ENCODE measurements at regions of chr13 and their contacts with region 1.

Region 1: DNA sequence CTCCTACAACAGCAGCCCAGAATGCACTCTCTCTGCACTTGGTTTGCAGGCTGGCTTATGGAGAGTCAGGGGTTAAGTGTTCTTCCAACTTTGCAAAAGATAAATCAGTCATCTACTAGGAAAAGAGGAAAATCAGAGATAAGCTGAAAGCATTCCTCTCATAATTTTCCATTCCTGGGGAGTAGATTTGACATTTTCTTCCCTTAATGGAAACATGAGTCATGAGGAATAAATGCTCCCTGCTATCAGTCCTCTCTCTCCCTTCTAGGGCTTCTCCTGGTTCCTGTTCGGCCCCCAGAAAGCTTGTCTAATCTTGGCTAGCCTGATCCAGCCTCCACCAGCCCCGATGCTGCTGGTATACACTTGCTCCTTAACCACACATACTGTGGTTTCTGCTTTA is 28.4 kb upstream of the ENOX1 start:
- DNase-seq: peak; percentile 68 to 89
- H3K4me3 ChIP-seq: no peak overlapping the region
- H3K4me3 Mint-ChIP-seq: peak overlapping the region; percentile 38
- H3K27ac Mint-ChIP-seq: peak overlapping the region; percentile 80
- H3K4me1 ChIP-seq: peaks cover 38% of the 10 kb centered on the region
- H3K4me1 Mint-ChIP-seq: peaks cover 34% of the 10 kb centered on the region
- H3K27me3 ChIP-seq: no peaks in the 10 kb centered on the region
- H3K27me3 Mint-ChIP-seq: no peaks in the 10 kb centered on the region
- CTCF ChIP-seq: no peak

Region 2: DNA sequence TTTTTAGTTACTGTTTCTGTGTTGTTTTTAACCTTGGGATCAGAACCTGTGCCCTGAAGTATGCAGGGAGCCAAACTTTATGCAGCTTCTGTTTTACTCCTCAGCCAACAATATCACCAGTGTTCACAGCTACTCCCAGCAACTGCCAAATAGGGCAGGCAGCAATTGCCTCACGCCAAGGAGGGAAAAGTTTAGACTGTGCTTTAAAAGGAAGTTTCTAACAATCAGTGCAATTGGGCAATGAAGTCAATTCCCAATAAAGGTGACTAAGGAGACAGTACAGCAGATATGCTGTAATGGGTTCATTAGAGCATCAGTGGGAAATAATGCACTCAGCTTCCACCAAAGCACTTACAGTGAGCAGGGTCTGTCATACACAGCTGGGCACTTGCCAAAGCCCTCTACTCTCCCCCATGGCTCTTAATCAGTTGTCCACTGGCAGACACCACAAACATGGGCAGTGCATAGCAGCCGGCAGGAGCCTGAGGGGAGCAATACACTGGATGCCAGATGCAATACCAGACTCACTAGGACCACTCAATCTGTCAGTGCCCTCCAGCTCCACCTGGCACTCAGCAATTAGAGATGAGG is 47.8 kb before region 1 on chr13:
- CTCF ChIA-PET with region 1: no interaction called
- POLR2A ChIA-PET with region 1: no interaction called
- intact Hi-C with region 1: no loop called
- DNase-seq: no peak
- H3K4me3 ChIP-seq: no peak overlapping the region
- H3K4me3 Mint-ChIP-seq: no peak overlapping the region
- H3K27ac Mint-ChIP-seq: no peak overlapping the region
- H3K4me1 ChIP-seq: peaks cover 37% of the 10 kb centered on the region
- H3K4me1 Mint-ChIP-seq: peaks cover 22% of the 10 kb centered on the region
- H3K27me3 ChIP-seq: no peaks in the 10 kb centered on the region
- H3K27me3 Mint-ChIP-seq: no peaks in the 10 kb centered on the region
- CTCF ChIP-seq: no peak

Region 3: GRCh38 chr13:43878892-43879754 is 63.9 kb after region 1 on chr13 and contains the start of gene CCDC122:
- CTCF ChIA-PET with region 1: no interaction called
- POLR2A ChIA-PET with region 1: no interaction called
- intact Hi-C with region 1: loop called (anchors 2 kb)
- DNase-seq: peak; percentile 83 to 90
- H3K4me3 ChIP-seq: peak within 1 kb of the TSS; percentile 88
- H3K4me3 Mint-ChIP-seq: peak within 1 kb of the TSS; percentile 96
- H3K27ac Mint-ChIP-seq: peak within 1 kb of the TSS; percentile 92
- H3K4me1 ChIP-seq: 0 out of 2 replicates have a peak, but pooled peaks cover 5% of the 10 kb centered on the region
- H3K4me1 Mint-ChIP-seq: peaks cover 13% of the 10 kb centered on the region
- H3K27me3 ChIP-seq: no peaks in the 10 kb centered on the region
- H3K27me3 Mint-ChIP-seq: no peaks in the 10 kb centered on the region
- CTCF ChIP-seq: no peak
- total RNA-seq, gene CCDC122: 15.6 and 21.2 TPM in 2 replicates

Measured in Caco-2 (cell line).